ENCODE measurements at regions of chr3 and their contacts with region 1.

Region 1: GRCh38 chr3:157136647-157137387 is 23.1 kb downstream of the CCNL1 start:
- DNase-seq: peak; percentile 63
- ATAC-seq: peak; percentile 27
- H3K4me3 ChIP-seq: no peak overlapping the region
- H3K27ac ChIP-seq: peak overlapping the region; percentile 99
- H3K4me1 ChIP-seq: peaks cover 56% of the 10 kb centered on the region
- H3K27me3 ChIP-seq: no peaks in the 10 kb centered on the region
- CTCF ChIP-seq: no peak

Region 2: DNA sequence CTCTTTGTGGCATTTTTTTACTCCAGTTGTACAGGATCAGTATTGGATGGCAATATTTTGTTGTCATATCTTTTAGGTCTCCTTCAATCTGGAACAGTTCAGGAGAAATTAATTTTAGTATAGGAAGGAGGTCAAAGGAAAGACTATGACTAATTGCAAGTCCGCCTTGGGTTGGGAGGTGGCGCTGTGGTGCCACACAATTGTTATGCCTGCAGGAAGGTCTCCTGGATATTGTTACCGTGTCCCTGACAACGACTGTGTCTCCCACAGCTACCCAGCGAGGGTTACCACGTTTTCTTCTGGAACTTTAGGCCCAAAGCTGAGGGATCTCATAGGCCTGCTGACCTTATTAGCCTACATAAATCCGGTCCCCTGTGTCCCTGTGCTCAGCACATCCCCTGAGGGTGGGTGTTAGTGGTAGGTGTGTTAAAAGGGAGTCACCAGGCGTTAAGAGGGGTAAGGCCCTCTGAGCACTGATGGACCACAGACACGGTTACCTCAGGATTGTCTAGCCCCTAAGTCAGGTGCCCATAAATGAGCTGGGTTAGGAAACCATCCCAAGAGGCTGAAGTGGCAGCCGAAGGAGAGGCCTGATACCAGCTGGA is 984.9 kb before region 1 on chr3:
- CTCF ChIA-PET with region 1: no interaction called
- POLR2A ChIA-PET with region 1: no interaction called
- intact Hi-C with region 1: loop called (anchors 2 kb)
- DNase-seq: peak; percentile 80
- ATAC-seq: peak; percentile 80
- H3K4me3 ChIP-seq: no peak overlapping the region
- H3K27ac ChIP-seq: no peak overlapping the region
- H3K4me1 ChIP-seq: no peaks in the 10 kb centered on the region
- H3K27me3 ChIP-seq: no peaks in the 10 kb centered on the region
- CTCF ChIP-seq: peak; percentile 88

Region 3: GRCh38 chr3:156535162-156535627 is 601.6 kb before region 1 on chr3:
- CTCF ChIA-PET with region 1: interaction called, 19 read pairs
- POLR2A ChIA-PET with region 1: interaction called, 6 read pairs
- intact Hi-C with region 1: loop called (anchors 1 kb)
- DNase-seq: peak; percentile 97
- ATAC-seq: peak; percentile 95
- H3K4me3 ChIP-seq: no peak overlapping the region
- H3K27ac ChIP-seq: peak overlapping the region; percentile 79
- H3K4me1 ChIP-seq: peaks cover 28% of the 10 kb centered on the region
- H3K27me3 ChIP-seq: no peaks in the 10 kb centered on the region
- CTCF ChIP-seq: peak; percentile 71

Region 4: GRCh38 chr3:156787926-156788663 is 348.7 kb before region 1 on chr3:
- CTCF ChIA-PET with region 1: no interaction called
- POLR2A ChIA-PET with region 1: no interaction called
- intact Hi-C with region 1: loop called (anchors 2 kb)
- DNase-seq: peak; percentile 94
- ATAC-seq: peak; percentile 73
- H3K4me3 ChIP-seq: peak overlapping the region; percentile 28; the same call in 1 of the 2 replicates
- H3K27ac ChIP-seq: peak overlapping the region; percentile 91
- H3K4me1 ChIP-seq: peaks cover 59% of the 10 kb centered on the region
- H3K27me3 ChIP-seq: no peaks in the 10 kb centered on the region
- CTCF ChIP-seq: no peak

Region 5: DNA sequence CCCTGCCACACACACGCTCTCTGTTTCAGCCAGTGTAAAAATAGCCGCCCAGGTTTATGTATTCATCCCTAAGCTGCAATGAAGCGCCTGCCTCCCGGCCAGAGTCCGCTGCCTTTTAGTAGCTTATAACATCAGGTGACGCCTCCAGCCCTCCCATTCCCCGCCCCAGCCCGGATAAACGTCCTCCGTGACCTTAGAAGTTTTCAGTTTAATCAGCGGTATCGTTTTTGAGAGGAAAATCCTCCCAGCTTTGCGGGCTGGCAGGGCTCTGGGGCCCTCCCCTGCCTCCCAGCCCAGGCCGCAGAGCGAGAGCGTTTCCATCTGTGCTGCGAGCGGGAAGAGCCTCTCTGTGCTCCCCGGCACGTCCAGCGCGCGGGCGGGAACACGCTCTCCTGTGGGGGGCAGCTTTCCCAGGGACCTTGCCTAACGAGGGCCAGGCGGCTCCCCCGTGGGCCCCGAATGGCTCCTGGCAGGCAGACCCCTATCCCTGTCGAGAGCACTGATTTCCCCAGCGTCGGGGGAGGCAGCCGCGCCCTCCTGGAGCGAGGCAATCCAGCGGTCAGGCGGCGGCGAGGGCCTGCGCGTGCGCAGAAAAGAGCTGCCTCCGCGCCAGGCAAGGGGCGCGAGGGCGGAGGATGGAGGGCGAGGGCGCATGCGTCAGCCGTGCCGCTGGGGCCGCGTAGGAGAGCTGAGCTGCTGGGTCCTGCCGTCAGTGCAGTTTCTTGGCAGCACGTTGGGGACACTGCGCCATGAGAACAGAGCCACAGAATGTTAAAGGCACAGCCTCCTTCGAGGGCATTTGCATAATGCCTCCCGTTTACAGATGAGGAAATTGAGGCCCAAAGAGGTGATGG is 48.0 kb before region 1 on chr3:
- CTCF ChIA-PET with region 1: interaction called, 16 read pairs
- POLR2A ChIA-PET with region 1: interaction called, 16 read pairs
- intact Hi-C with region 1: no loop called
- DNase-seq: peak; percentile 93
- ATAC-seq: peak; percentile 84
- H3K4me3 ChIP-seq: peak overlapping the region; percentile 70
- H3K27ac ChIP-seq: peak overlapping the region; percentile 98
- H3K4me1 ChIP-seq: peaks cover 41% of the 10 kb centered on the region
- H3K27me3 ChIP-seq: no peaks in the 10 kb centered on the region
- CTCF ChIP-seq: peak; percentile 14; the same call in 1 of the 2 replicates

Region 6: DNA sequence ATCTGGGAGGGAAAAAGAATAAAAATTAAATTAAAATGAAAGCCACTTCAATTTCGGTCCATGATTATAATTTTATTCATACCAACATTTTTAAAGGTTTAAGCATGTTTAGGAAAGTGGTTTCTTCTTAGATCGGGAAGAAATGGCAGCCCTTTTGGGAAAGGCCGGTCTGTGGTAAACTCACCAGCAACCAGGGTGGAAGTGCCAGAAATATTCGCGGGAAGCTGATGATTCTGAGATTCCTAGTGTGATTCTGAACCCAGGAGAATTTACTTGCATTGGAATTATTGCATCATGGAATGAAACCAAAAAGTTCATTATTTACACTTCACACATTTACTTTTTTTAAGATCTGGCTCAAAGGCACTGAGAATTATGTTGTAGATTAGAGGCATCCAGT is 120.3 kb after region 1 on chr3:
- CTCF ChIA-PET with region 1: no interaction called
- POLR2A ChIA-PET with region 1: no interaction called
- intact Hi-C with region 1: no loop called
- DNase-seq: no peak
- ATAC-seq: no peak
- H3K4me3 ChIP-seq: no peak overlapping the region
- H3K27ac ChIP-seq: no peak overlapping the region
- H3K4me1 ChIP-seq: no peaks in the 10 kb centered on the region
- H3K27me3 ChIP-seq: no peaks in the 10 kb centered on the region
- CTCF ChIP-seq: no peak